ENCODE measurements at regions of chr3 and their contacts with region 1.

Region 1: GRCh38 chr3:113111011-113111707 is 100.2 kb upstream of the BOC start:
- DNase-seq: peak; percentile 5
- H3K4me3 Mint-ChIP-seq: no peak overlapping the region
- H3K27ac Mint-ChIP-seq: peak overlapping the region; percentile 21
- H3K4me1 Mint-ChIP-seq: peaks cover 33% of the 10 kb centered on the region
- H3K27me3 Mint-ChIP-seq: no peaks in the 10 kb centered on the region

Region 2: GRCh38 chr3:112405845-112406244 is 705.3 kb before region 1 on chr3:
- intact Hi-C with region 1: no loop called
- DNase-seq: no peak
- H3K4me3 Mint-ChIP-seq: no peak overlapping the region
- H3K27ac Mint-ChIP-seq: no peak overlapping the region
- H3K4me1 Mint-ChIP-seq: peaks cover 26% of the 10 kb centered on the region
- H3K27me3 Mint-ChIP-seq: no peaks in the 10 kb centered on the region

Region 3: GRCh38 chr3:112963683-112964082 is 147.5 kb before region 1 on chr3:
- intact Hi-C with region 1: no loop called
- DNase-seq: no peak
- H3K4me3 Mint-ChIP-seq: no peak overlapping the region
- H3K27ac Mint-ChIP-seq: no peak overlapping the region
- H3K4me1 Mint-ChIP-seq: peaks cover 38% of the 10 kb centered on the region
- H3K27me3 Mint-ChIP-seq: no peaks in the 10 kb centered on the region

Region 4: GRCh38 chr3:113136071-113136470 is 24.9 kb after region 1 on chr3:
- intact Hi-C with region 1: loop called (anchors 1 kb)
- DNase-seq: no peak
- H3K4me3 Mint-ChIP-seq: no peak overlapping the region
- H3K27ac Mint-ChIP-seq: no peak overlapping the region
- H3K4me1 Mint-ChIP-seq: peaks cover 2% of the 10 kb centered on the region
- H3K27me3 Mint-ChIP-seq: no peaks in the 10 kb centered on the region

Region 5: DNA sequence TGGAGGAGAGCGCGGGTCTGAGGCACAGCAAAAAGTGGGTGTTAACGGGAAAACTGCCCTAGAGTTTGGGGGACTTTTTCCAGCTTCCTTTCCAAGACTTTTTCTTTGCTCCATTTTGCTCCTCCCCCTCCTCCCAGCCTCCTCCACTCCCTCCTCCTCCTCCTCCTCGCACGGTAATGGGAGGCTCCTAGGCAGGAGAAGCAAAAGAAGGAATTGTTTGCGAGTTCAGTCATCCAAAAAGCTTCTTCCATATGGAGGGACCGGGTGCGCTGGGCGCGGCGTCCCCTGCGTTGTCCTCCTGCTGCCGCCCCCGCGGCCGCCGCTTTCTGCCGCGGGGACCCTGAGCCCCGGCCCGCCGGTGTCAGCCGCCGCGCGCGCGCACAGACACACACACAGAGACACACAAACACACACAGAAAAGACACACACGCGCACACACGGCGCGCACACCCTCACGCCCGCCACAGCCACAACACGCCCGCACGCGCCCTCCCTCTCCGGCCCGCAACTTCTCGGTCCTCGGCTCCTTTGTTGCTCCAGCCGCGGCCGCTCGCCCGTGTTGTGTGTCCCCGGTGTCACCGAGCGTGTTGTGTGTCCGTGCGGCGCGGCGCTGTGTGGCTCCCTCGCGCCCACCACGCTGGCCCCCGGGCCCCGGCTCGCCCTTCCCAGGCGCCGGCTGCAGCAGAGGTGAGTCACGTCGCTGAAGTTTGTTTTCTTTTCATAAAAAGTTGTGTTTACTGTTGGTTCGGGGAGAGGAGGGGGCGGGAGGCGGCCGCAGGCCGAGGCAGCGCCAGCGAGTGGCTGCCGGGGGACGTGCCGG is 100.4 kb after region 1 on chr3 and contains the start of gene BOC:
- intact Hi-C with region 1: loop called (anchors 5 kb)
- DNase-seq: no peak
- H3K4me3 Mint-ChIP-seq: peak within 1 kb of the TSS; percentile 83
- H3K27ac Mint-ChIP-seq: no peak within 1 kb of the TSS
- H3K4me1 Mint-ChIP-seq: peaks cover 15% of the 10 kb centered on the region
- H3K27me3 Mint-ChIP-seq: peaks cover 73% of the 10 kb centered on the region
- total RNA-seq, gene BOC: 2.1 and 3.3 TPM in 2 replicates

Measured in activated T-helper 1 cell treated with anti-CD3 and anti-CD28 coated beads, Interleukin-12 subunit alpha, Interleukin-12 subunit beta, Interleukin-2, Interleukin-4 antibody, amounts not matched to agents 30 ng/mL and 10 ng/mL and 1 ng/mL, durations not matched to agents 14 hours and 24 hours and 36 hours (primary cell).